Left ventricle myocardium superior (tissue), 1 donor: ENCODE measurements at regions of chr9 and their contacts with region 1.

Region 1: GRCh38 chr9:71928832-71929604 is 17.6 kb downstream of the C9orf85 start:
- DNase-seq: no peak
- ATAC-seq: no peak

Region 2: DNA sequence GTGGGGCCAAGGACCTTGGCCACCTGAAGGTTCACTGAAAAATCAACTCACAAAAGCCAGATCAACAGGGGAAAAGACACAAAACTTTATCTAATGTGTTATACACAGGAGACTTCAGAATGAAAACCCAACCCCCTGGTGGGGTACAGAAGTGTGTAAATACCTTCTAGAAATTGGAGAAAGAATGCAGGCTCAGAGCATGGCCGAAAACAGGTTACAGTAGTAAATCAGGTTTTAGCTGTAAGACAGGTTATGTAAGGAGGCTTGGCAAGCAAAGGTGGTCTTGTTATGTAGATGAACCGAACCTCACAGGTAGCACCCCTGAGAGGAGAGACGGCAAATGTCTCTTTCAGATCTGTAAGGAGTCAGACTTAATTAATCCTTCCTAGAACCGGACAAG is 170.7 kb before region 1 on chr9:
- intact Hi-C with region 1: no loop called
- DNase-seq: no peak
- ATAC-seq: no peak

Region 3: GRCh38 chr9:71975833-71976232 is 46.8 kb after region 1 on chr9:
- intact Hi-C with region 1: loop called (anchors 10 kb)
- DNase-seq: no peak
- ATAC-seq: no peak